BJ (cell line): ENCODE measurements at regions of chr14 and their contacts with region 1.

Region 1: GRCh38 chr14:37874429-37875191 is 279.2 kb downstream of the TTC6 start:
- DNase-seq: no peak
- H3K4me3 ChIP-seq: no peak overlapping the region
- H3K27me3 ChIP-seq: no peaks in the 10 kb centered on the region
- CTCF ChIP-seq: peak; percentile 93

Region 2: GRCh38 chr14:37246427-37246914 is 628.1 kb before region 1 on chr14:
- CTCF ChIA-PET with region 1: interaction called, 10 read pairs
- POLR2A ChIA-PET with region 1: no interaction called
- DNase-seq: no peak
- H3K4me3 ChIP-seq: no peak overlapping the region
- H3K27me3 ChIP-seq: no peaks in the 10 kb centered on the region
- CTCF ChIP-seq: peak; percentile 68

Region 3: GRCh38 chr14:37709419-37710195 is 165.0 kb before region 1 on chr14:
- CTCF ChIA-PET with region 1: interaction called, 54 read pairs
- POLR2A ChIA-PET with region 1: no interaction called
- DNase-seq: no peak
- H3K4me3 ChIP-seq: no peak overlapping the region
- H3K27me3 ChIP-seq: no peaks in the 10 kb centered on the region
- CTCF ChIP-seq: peak; percentile 44

Region 4: DNA sequence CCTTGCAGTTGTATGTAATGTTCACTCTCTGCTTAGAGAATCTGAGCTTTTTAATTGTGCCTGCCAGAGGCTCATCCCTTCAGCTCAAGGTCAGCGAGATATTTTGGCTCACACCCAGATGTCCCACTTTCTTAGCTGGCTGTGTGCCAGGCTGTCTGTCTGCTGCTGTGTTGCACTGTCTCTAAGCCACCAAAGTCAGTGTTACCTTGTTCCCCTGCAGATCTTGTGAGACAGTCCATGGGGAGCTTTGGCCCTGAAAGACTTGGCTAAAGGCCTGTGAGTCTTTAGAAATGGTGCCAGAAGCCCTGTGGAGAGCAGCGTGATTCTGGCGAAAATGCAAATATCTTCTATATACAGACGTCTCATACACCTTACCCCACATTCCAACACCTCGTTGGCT is 14.5 kb after region 1 on chr14:
- CTCF ChIA-PET with region 1: interaction called, 26 read pairs
- POLR2A ChIA-PET with region 1: no interaction called
- DNase-seq: no peak
- H3K4me3 ChIP-seq: no peak overlapping the region
- H3K27me3 ChIP-seq: no peaks in the 10 kb centered on the region
- CTCF ChIP-seq: no peak